ENCODE measurements at regions of chr15 and their contacts with region 1.

Region 1: DNA sequence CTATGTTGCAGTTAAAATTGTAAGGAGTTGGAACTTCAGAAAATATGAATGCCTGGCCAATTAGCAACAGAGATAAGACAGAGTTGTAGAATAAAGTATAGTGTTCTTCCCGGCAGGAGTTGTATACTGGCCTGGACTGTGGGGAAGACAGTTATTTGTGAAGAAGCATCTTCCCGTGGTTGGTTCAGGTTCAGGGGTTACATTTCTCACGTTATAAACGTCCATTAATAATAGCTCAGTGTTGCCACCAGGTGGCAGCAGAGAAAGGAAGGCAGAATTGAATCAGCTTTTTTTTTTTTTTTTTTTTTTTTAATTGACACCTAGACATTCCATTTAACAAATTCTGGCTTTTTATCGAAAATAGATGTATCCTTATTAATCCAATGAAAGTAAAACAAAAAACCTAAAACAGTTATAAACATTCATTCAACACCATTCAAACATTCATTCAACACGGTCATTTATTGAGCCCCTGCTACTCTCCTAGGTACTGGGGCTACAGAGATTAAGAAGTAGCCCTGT is 66.4 kb upstream of the NR2E3 start:
- DNase-seq: peak; percentile 68
- H3K4me3 ChIP-seq: no peak overlapping the region
- H3K27ac ChIP-seq: no peak overlapping the region
- H3K4me1 ChIP-seq: no peaks in the 10 kb centered on the region
- H3K27me3 ChIP-seq: no peaks in the 10 kb centered on the region
- CTCF ChIP-seq: peak; percentile 81

Region 2: DNA sequence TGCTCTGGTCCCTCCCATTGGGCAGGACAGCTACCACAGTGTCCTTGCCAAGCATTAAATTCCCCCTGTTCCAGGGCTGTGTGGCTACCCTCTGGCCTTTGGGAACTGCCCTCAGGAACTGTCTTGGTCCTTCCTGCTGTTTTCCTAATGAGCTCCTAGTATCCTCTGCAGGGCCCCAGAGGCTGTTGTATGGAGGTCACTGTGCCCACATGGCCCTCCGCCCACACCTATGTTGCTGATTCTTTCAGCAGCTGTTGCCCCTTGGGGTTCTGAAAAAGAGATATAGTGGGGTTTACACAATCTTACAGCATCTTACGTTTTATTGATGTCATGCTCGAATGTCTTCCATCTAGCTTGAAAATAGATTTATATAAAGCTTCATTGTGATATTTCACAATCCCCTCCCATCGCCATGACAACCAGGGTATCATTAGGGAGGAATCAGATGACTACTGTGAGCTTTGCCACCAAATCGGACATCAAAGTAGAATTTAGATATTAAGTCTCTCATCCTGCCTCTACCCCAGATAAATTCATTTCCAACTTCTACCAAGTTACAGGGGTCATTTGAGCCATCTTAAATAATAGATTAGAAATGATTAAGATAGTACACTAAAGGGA is 30.6 kb before region 1 on chr15:
- CTCF ChIA-PET with region 1: no interaction called
- POLR2A ChIA-PET with region 1: interaction called, 11 read pairs
- intact Hi-C with region 1: no loop called
- DNase-seq: peak; percentile 12
- H3K4me3 ChIP-seq: no peak overlapping the region
- H3K27ac ChIP-seq: no peak overlapping the region
- H3K4me1 ChIP-seq: no peaks in the 10 kb centered on the region
- H3K27me3 ChIP-seq: peaks cover 12% of the 10 kb centered on the region
- CTCF ChIP-seq: no peak

Region 3: GRCh38 chr15:71780115-71780976 is 36.4 kb after region 1 on chr15:
- CTCF ChIA-PET with region 1: interaction called, 10 read pairs
- POLR2A ChIA-PET with region 1: no interaction called
- intact Hi-C with region 1: no loop called
- DNase-seq: peak; percentile 69
- H3K4me3 ChIP-seq: no peak overlapping the region
- H3K27ac ChIP-seq: no peak overlapping the region
- H3K4me1 ChIP-seq: no peaks in the 10 kb centered on the region
- H3K27me3 ChIP-seq: no peaks in the 10 kb centered on the region
- CTCF ChIP-seq: peak; percentile 93

Region 4: DNA sequence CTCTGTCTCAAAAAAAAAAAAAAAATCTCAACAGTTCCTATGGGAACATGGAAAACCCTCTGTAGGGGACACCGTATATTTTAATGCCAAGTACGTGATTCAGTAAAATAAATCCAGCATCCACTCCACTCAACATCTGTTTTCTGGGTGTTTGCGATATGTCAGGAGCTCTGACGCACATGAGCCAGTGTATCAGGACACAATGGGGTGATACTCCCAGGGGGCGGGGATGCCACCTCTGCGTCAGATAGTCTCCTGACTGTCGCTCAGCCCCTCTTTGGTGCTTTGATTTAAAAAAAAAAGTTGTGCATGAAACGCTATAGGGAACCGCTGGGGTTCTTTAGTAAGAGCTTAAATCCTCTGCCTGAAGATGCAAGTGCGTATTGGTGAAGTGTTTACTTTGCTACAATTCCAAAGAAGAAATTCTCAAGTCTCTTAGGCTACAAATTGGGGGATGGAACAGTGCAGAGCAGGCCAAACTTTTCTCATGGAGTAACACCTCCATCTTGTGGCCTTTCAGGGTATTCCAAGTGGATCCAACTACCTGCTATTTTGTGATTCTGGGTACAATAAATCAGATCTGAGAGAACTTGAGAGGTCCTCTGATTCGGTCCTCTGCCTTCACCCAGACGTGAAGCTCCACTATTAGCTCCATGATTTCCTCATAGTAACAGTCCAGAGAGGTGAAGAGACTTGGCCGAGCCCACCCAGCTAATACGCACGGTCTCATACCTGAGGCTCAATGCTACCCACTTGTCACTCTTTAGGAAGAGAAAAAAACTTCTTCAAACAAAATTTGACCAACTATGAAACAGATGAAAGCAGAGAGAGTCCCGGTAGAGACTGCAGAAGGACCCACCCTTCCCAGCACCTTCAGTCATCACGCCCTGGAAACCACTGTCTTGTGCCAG is 57.2 kb after region 1 on chr15:
- CTCF ChIA-PET with region 1: interaction called, 22 read pairs
- POLR2A ChIA-PET with region 1: no interaction called
- intact Hi-C with region 1: no loop called
- DNase-seq: peak; percentile 75
- H3K4me3 ChIP-seq: no peak overlapping the region
- H3K27ac ChIP-seq: no peak overlapping the region
- H3K4me1 ChIP-seq: no peaks in the 10 kb centered on the region
- H3K27me3 ChIP-seq: no peaks in the 10 kb centered on the region
- CTCF ChIP-seq: peak; percentile 78